Prostate gland (tissue), 2 donors: ENCODE measurements at regions of chr11 and their contacts with region 1.

Region 1: DNA sequence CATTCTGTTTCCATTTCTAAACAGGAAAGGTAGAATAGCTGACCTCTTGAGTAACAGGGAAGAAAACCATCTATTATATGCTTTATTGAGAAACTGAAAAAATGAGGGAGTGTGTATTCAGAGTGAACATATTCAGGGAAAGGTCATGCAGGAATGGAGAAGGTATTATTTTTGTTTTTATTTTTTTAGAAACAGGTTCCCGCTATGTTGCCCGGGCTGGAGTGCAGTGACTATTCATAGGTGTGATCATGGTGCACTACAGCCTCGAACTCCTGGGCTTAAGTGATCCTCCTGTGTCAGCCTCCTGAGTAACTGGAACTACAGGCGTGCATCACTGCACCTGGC is 8.8 kb upstream of the RCE1 start:
- DNase-seq: no peak
- H3K4me3 ChIP-seq: no peak overlapping the region
- H3K27ac ChIP-seq: no peak overlapping the region
- H3K4me1 ChIP-seq: no peaks in the 10 kb centered on the region
- H3K27me3 ChIP-seq: no peaks in the 10 kb centered on the region
- CTCF ChIP-seq: no peak
- POLR2A ChIP-seq: no peak

Region 2: GRCh38 chr11:66694732-66695207 is 139.7 kb before region 1 on chr11:
- intact Hi-C with region 1: loop called (anchors 1 kb)
- DNase-seq: peak; percentile 94
- H3K4me3 ChIP-seq: no peak overlapping the region
- H3K27ac ChIP-seq: peak overlapping the region; percentile 6 to 41
- H3K4me1 ChIP-seq: no peaks in the 10 kb centered on the region
- H3K27me3 ChIP-seq: no peaks in the 10 kb centered on the region
- CTCF ChIP-seq: peak; percentile 90 to 100 (median 98)
- POLR2A ChIP-seq: no peak